SK-N-SH (cell line): ENCODE measurements at regions of chr11 and their contacts with region 1.

Region 1: DNA sequence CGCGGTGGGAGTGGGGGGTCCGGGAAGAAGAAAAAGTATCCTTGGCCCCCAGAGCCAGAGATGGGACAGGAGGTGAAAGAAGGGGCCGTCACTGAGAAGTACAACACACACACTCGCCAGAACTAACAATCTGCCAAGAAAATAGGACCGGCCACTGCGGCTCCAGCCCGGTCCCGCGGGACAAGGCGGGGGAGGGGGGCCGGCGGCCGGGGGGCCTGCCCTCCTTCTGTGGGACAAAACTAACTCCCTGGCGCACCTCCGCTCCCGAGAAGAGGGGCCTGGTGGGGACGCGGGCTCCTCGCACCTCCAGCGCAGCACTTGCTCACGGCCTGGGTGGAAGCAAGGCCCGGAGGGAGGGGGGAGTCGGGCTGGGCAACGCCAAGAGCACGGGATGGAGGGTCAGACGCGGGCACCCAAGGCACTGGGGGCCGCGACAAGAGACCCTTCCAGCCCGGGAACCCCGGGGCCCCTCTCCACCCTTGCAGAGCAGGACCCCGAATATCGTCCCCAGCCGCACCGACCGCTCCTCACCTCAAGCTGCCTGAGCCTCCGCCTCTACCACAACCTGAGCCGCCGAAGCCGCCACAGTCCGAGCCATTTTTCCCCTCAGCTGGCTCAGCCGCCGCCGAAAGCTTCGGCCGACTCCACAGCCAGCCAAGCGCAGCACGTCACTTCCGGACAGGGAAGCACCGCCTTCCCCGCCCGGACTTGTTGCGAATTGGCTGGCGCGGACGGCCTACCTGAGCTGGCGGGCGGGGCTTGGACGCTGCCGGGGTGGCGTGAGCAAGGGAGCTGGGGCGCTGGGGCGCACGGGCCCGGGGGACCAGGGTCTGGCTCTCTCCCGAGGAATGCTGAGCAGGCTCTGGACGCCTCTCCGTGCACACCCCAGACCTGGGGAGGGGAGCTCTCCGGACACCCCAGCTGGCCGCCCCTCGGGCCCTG is at the start of gene PIK3C2A:
- DNase-seq: peak; percentile 96
- H3K4me3 ChIP-seq: peak within 1 kb of the TSS; percentile 63 to 78
- H3K27ac ChIP-seq: peak within 1 kb of the TSS; percentile 89 to 91
- H3K4me1 ChIP-seq: peaks cover 2 to 4% of the 10 kb centered on the region in 2 experiments; a peak in 2 of 4 replicates
- H3K27me3 ChIP-seq: no peaks in the 10 kb centered on the region
- CTCF ChIP-seq: no peak
- EP300 ChIP-seq: no peak; a peak in 1 of 4 replicates
- RAD21 ChIP-seq: no peak
- polyA plus RNA-seq, gene PIK3C2A: 9.3 and 13.3 TPM in 2 replicates

Region 2: GRCh38 chr11:17077520-17078401 is 129.8 kb before region 1 on chr11 and contains the start of gene RPS13:
- CTCF ChIA-PET with region 1: no interaction called
- POLR2A ChIA-PET with region 1: interaction called, 17 read pairs
- DNase-seq: peak; percentile 92
- H3K4me3 ChIP-seq: peak within 1 kb of the TSS; percentile 98
- H3K27ac ChIP-seq: peak within 1 kb of the TSS; percentile 79 to 87
- H3K4me1 ChIP-seq: peaks cover 7 to 18% of the 10 kb centered on the region in 2 experiments; a peak in 2 of 4 replicates
- H3K27me3 ChIP-seq: no peaks in the 10 kb centered on the region
- CTCF ChIP-seq: no peak
- EP300 ChIP-seq: peak in 1 of 2 experiments; percentile 31; a peak in 1 of 4 replicates
- RAD21 ChIP-seq: no peak
- polyA plus RNA-seq, gene RPS13: 950 and 997 TPM in 2 replicates